ENCODE measurements at regions of chr14 and their contacts with region 1.

Region 1: DNA sequence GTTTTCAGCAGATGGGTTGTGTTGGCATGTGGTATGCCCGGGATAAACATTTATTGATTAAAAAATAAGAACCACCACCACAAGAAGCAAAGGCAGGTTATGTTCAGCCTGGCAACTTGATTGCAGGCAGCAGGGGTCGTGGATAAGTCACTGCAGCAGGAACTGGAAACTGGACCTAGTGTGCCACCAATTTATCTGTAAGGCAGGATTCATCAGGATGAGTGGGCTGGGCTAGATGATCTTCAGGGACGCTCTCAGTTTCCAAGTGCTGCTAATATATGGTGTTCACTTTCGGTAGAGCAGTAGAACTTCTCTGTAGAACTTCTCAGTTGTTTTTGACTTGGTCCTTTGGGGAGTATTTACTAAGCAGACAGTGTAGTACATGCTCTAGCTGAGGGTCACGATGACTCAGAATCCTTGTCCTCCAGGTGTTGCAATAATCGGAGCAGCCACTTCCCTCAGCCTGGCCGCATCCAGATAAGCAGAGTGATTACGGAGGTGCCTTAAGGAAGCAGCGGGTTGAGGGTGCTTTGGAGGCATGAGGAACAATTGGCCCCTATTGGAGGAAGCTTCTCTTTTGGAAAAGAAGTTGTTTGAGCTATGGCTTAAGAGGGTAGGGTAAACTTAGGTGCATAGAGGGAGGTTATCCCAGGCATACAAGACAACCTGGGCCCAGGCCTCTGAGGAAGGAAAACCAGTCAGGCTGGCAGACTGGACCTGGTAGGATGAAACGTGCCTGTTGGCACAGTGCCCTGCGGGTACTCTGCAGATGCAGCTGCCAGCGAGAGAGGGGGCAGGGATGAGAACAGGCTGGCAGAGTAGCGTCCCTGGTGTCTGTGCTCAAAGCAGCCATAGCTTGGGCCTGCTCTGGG is 104.0 kb downstream of the GPR135 start:
- DNase-seq: peak; percentile 100
- ATAC-seq: peak; percentile 72
- H3K4me3 ChIP-seq: peak overlapping the region; percentile 4
- H3K27ac ChIP-seq: peak overlapping the region; percentile 72
- H3K4me1 ChIP-seq: peaks cover 82% of the 10 kb centered on the region
- H3K27me3 ChIP-seq: no peaks in the 10 kb centered on the region
- CTCF ChIP-seq: peak; percentile 36

Region 2: DNA sequence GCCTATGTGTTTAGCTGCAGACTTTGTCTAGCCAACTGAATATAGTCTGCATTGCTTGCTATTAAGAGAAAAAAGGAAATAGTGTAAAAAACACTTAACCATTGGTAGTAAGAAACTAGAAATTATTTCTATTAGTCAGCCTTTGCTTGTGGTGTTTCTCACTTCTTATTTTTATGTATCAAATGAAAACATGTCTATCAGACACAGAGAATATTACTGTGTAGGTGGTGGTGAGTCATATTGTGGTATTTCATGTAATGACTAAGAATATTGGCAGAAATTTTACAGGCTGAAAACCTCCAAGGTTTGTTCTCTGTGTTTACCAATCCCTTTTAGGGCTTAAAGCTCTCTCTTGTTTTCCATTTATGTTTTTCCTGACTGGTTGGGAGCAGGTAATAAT is 85.5 kb before region 1 on chr14:
- CTCF ChIA-PET with region 1: no interaction called
- POLR2A ChIA-PET with region 1: no interaction called
- intact Hi-C with region 1: loop called (anchors 2 kb)
- DNase-seq: peak; percentile 100
- ATAC-seq: peak; percentile 75
- H3K4me3 ChIP-seq: peak overlapping the region; percentile 23
- H3K27ac ChIP-seq: peak overlapping the region; percentile 64
- H3K4me1 ChIP-seq: peaks cover 60% of the 10 kb centered on the region
- H3K27me3 ChIP-seq: no peaks in the 10 kb centered on the region
- CTCF ChIP-seq: no peak

Region 3: GRCh38 chr14:59306775-59307174 is 54.4 kb before region 1 on chr14:
- CTCF ChIA-PET with region 1: no interaction called
- POLR2A ChIA-PET with region 1: no interaction called
- intact Hi-C with region 1: loop called (anchors 2 kb)
- DNase-seq: peak; percentile 99
- ATAC-seq: peak; percentile 91
- H3K4me3 ChIP-seq: peak overlapping the region; percentile 3; the same call in 1 of the 2 replicates
- H3K27ac ChIP-seq: peak overlapping the region; percentile 39
- H3K4me1 ChIP-seq: peaks cover 49% of the 10 kb centered on the region
- H3K27me3 ChIP-seq: no peaks in the 10 kb centered on the region
- CTCF ChIP-seq: no peak

Region 4: DNA sequence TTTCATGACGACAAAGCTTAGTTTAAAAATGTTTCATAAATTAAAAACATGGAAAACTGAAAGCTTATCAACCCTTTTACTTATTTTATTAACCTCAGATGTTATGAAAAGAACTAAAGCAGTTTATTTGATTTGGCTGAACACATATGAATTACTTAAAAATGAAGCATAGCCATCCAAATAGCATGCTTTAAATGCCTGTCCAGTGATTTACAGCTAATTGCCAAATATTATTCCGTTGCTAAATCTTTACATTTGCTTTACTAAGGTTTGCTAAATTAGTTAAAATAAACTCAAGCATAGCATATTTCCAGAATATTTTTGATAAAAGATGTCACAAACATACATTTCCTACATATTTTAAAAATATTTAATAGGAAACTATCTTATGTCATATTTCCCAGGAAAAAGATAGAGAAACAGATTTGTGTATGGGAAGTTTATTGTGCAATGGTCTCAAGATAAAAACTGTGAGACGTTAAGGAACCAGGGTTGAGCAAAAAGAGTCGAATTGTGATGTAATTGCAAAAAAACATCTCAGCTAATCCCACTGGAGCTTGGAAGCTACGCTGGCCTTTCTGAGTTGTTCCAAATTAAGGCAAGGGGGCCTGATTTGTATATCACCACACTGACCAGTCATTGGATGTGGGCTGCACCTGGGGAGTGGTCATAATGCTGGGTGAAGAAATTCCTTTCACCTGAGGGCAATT is 78.3 kb after region 1 on chr14:
- CTCF ChIA-PET with region 1: no interaction called
- POLR2A ChIA-PET with region 1: no interaction called
- intact Hi-C with region 1: loop called (anchors 1 kb)
- DNase-seq: no peak
- ATAC-seq: no peak
- H3K4me3 ChIP-seq: no peak overlapping the region
- H3K27ac ChIP-seq: no peak overlapping the region
- H3K4me1 ChIP-seq: peaks cover 13% of the 10 kb centered on the region
- H3K27me3 ChIP-seq: no peaks in the 10 kb centered on the region
- CTCF ChIP-seq: no peak